AG04450 (cell line): ENCODE measurements at regions of chr12 and their contacts with region 1.

Region 1: GRCh38 chr12:25894759-25895158 is 63.7 kb upstream of the RASSF8 start:
- DNase-seq: no peak
- H3K4me3 ChIP-seq: no peak overlapping the region
- H3K27ac ChIP-seq: no peak overlapping the region
- H3K27me3 ChIP-seq: no peaks in the 10 kb centered on the region
- CTCF ChIP-seq: no peak

Region 2: GRCh38 chr12:25825446-25825845 is 69.3 kb before region 1 on chr12:
- CTCF ChIA-PET with region 1: no interaction called
- POLR2A ChIA-PET with region 1: no interaction called
- DNase-seq: no peak
- H3K4me3 ChIP-seq: no peak overlapping the region
- H3K27ac ChIP-seq: no peak overlapping the region
- H3K27me3 ChIP-seq: no peaks in the 10 kb centered on the region
- CTCF ChIP-seq: 0 out of 2 replicates have a peak, but pooled peaks have one; percentile 4

Region 3: DNA sequence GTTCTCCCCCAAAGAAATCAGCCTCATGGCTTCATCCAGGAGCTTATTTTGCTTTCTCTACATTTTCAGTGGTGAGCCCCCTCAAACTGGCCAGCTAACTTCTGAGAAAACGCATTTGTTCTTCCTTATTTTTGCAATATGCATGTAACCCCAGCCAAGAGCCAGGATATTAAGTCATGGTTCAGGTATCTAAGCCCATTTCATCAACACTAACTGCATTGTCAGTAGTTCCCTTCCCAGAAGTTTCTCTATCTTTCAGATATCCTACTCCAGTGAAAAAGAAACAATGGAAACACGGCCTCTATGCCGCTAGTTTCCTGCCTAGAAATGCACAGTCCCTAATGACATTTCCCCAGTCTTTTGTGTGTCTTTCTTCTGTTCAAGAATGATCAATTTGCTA is 39.0 kb before region 1 on chr12:
- CTCF ChIA-PET with region 1: interaction called, 10 read pairs
- POLR2A ChIA-PET with region 1: no interaction called
- DNase-seq: no peak
- H3K4me3 ChIP-seq: no peak overlapping the region
- H3K27ac ChIP-seq: no peak overlapping the region
- H3K27me3 ChIP-seq: no peaks in the 10 kb centered on the region
- CTCF ChIP-seq: no peak

Region 4: DNA sequence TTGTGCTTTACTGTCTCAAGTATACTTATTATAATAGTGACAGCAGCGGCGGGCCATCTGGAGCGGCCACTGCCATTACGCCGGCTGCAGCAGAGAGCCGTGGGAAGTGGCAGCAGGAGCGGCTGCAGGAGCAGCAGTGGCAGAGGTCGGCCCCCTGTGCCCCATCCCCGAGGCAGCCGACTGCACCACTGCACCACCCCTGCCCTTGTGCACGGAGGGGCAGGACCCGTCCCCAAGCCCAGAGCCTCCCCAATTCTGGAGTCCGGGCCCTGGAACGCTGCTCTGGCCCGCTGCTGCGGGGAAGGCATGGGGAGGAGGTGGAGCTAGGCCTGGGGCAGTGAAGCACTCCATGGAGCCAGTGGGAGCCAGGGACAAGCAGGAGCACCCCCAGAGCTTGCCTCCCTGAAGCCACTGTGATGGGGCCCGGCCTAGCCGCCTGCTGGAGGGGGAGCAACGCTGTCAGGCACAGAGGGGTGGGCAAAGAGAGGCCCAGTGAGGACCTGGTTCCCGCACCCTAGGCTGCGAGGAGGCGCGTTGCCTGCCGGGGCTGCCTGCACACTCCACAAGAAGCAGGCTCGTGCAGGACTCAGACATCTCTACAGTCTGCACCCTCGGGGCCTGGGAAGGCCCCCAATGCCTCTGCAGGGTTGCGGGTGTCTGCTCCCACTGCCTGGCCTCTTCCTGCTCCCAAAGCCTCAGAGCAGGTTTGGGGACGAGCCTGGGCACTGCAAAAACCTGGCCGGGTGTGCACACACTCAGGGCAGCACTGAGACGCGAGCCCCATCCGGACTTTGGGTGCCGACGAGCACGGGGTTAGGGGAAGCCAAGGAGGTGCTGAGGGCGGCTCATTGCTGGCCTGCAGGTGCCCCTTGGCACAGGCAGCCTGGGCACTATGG is 10.5 kb before region 1 on chr12:
- CTCF ChIA-PET with region 1: no interaction called
- POLR2A ChIA-PET with region 1: no interaction called
- DNase-seq: no peak
- H3K4me3 ChIP-seq: no peak overlapping the region
- H3K27ac ChIP-seq: no peak overlapping the region
- H3K27me3 ChIP-seq: no peaks in the 10 kb centered on the region
- CTCF ChIP-seq: no peak